ENCODE measurements at regions of chr10 and their contacts with region 1.

Region 1: GRCh38 chr10:132163278-132163765 is 23.4 kb upstream of the DPYSL4 start:
- DNase-seq: peak; percentile 77
- H3K4me3 Mint-ChIP-seq: no peak overlapping the region
- H3K27ac Mint-ChIP-seq: peak overlapping the region; percentile 44
- H3K4me1 Mint-ChIP-seq: peaks cover 30% of the 10 kb centered on the region
- H3K27me3 Mint-ChIP-seq: no peaks in the 10 kb centered on the region

Region 2: GRCh38 chr10:131900350-131901146 is 262.8 kb before region 1 on chr10 and contains the start of gene PPP2R2D:
- CTCF ChIA-PET with region 1: no interaction called
- intact Hi-C with region 1: loop called (anchors 2 kb)
- DNase-seq: peak; percentile 94
- H3K4me3 Mint-ChIP-seq: peak within 1 kb of the TSS; percentile 87
- H3K27ac Mint-ChIP-seq: peak within 1 kb of the TSS; percentile 92
- H3K4me1 Mint-ChIP-seq: peaks cover 47% of the 10 kb centered on the region
- H3K27me3 Mint-ChIP-seq: peaks cover 4% of the 10 kb centered on the region
- total RNA-seq, gene PPP2R2D: 31.5 to 34.7 TPM

Region 3: GRCh38 chr10:131981429-131982184 is 181.7 kb before region 1 on chr10 and contains the start of gene BNIP3:
- CTCF ChIA-PET with region 1: no interaction called
- intact Hi-C with region 1: loop called (anchors 2 kb)
- DNase-seq: peak; percentile 94
- H3K4me3 Mint-ChIP-seq: peak within 1 kb of the TSS; percentile 83
- H3K27ac Mint-ChIP-seq: peak within 1 kb of the TSS; percentile 65
- H3K4me1 Mint-ChIP-seq: peaks cover 35% of the 10 kb centered on the region
- H3K27me3 Mint-ChIP-seq: no peaks in the 10 kb centered on the region
- total RNA-seq, gene BNIP3: 55.5 to 55.9 TPM

Region 4: GRCh38 chr10:132175907-132176581 is 12.7 kb after region 1 on chr10:
- CTCF ChIA-PET with region 1: no interaction called
- intact Hi-C with region 1: loop called (anchors 1 kb)
- DNase-seq: peak; percentile 74
- H3K4me3 Mint-ChIP-seq: no peak overlapping the region
- H3K27ac Mint-ChIP-seq: no peak overlapping the region
- H3K4me1 Mint-ChIP-seq: peaks cover 24% of the 10 kb centered on the region
- H3K27me3 Mint-ChIP-seq: peaks cover 23% of the 10 kb centered on the region

Region 5: GRCh38 chr10:132223156-132223590 is 59.9 kb after region 1 on chr10:
- CTCF ChIA-PET with region 1: interaction called, 4 read pairs
- intact Hi-C with region 1: loop called (anchors 10 kb)
- DNase-seq: peak; percentile 86
- H3K4me3 Mint-ChIP-seq: no peak overlapping the region
- H3K27ac Mint-ChIP-seq: no peak overlapping the region
- H3K4me1 Mint-ChIP-seq: no peaks in the 10 kb centered on the region
- H3K27me3 Mint-ChIP-seq: no peaks in the 10 kb centered on the region